Activated CD8-positive, alpha-beta memory T cell treated with anti-CD3 and anti-CD28 coated beads, Interleukin-2, amount 10 ng/mL, durations not matched to agents 7 days and 5 days (primary cell): ENCODE measurements at regions of chr3 and their contacts with region 1.

Region 1: GRCh38 chr3:148943506-148944205 is 47.7 kb upstream of the GYG1 start:
- DNase-seq: no peak
- ATAC-seq: peak; percentile 95
- H3K4me3 Mint-ChIP-seq: no peak overlapping the region
- H3K27ac Mint-ChIP-seq: no peak overlapping the region
- H3K4me1 Mint-ChIP-seq: peaks cover 2% of the 10 kb centered on the region
- H3K27me3 Mint-ChIP-seq: peaks cover 23% of the 10 kb centered on the region

Region 2: DNA sequence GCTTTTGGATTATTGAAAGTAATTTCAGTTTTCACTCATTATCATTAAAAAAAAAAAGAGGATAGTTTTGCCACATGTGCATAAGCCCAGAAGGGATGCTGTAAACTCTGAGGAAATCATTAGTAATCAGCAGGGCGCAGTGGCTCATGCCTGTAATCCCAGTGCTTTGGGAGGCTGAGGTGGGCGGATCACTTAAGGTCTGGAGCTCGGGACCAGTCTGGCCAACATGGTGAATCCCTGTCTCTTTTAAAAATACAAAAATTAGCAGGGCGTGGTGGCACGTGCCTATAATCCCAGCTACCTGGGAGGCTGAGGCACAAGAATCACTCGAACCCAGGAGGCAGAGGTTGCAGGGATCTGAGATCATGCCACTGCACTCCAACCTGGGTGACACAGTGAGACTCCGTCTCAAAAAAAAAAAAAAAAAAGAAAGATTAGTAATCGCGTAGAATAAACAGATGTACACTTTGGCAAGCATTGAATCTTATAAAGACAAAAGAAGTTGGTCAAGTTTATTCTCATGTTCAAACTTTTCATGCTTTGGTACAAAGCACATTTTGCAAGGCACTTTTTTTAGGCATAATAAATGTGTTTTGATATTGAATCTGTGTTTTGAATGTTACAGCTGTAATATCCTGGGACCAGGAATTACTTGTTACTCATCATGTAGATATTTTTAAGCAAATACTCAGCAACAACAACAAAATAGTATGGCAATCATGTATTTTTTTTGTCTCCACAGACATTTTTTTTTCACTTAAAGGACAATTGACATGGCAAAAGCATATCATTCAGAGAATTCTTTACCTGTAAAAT is 339.2 kb before region 1 on chr3:
- CTCF ChIA-PET with region 1: no interaction called
- DNase-seq: no peak
- ATAC-seq: no peak
- H3K4me3 Mint-ChIP-seq: no peak overlapping the region
- H3K27ac Mint-ChIP-seq: no peak overlapping the region
- H3K4me1 Mint-ChIP-seq: no peaks in the 10 kb centered on the region
- H3K27me3 Mint-ChIP-seq: no peaks in the 10 kb centered on the region

Region 3: DNA sequence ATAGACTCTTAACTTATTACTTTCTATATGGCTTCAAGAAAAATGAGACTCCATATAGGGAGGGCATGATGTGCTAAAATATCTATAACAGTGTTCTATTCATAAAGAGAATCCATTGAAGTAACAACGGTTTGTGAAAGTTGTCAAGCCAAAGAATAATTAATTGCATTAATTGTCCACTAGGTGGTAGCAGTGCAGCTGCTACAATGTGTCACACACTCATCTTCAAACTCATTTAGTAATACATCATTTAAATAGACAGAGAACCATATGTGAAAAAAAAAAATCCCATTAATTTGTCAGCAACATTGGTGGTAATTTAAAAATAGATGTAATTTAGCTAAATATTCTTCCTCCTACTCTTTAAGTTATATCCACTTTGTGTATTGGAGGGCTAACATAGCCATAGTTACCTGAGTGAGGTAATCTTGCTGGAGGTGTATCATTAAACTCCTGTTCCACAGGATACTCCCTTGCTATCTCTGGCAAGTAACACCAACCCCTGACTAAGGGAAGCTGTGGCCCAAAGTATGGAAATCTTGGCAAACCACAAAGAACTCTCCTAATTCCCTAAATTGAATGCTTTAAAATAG is 82.3 kb before region 1 on chr3:
- CTCF ChIA-PET with region 1: interaction called, 50 read pairs
- DNase-seq: no peak
- ATAC-seq: peak; percentile 45
- H3K4me3 Mint-ChIP-seq: no peak overlapping the region
- H3K27ac Mint-ChIP-seq: no peak overlapping the region
- H3K4me1 Mint-ChIP-seq: no peaks in the 10 kb centered on the region
- H3K27me3 Mint-ChIP-seq: peaks cover 33% of the 10 kb centered on the region